Endothelial cell of umbilical vein (primary cell): ENCODE measurements at regions of chr17 and their contacts with region 1.

Region 1: GRCh38 chr17:2929881-2930533 is 133.4 kb downstream of the OR1D5 start:
- DNase-seq: peak; percentile 17
- H3K4me3 ChIP-seq: no peak overlapping the region
- H3K27ac ChIP-seq: no peak overlapping the region
- H3K4me1 ChIP-seq: no peaks in the 10 kb centered on the region
- H3K27me3 ChIP-seq: peaks cover 0 to 4% of the 10 kb centered on the region in 2 experiments
- CTCF ChIP-seq: peak; percentile 53 to 79
- POLR2A ChIP-seq: no peak

Region 2: GRCh38 chr17:2786176-2786881 is 143.7 kb before region 1 on chr17:
- CTCF ChIA-PET with region 1: interaction called, 11 read pairs
- POLR2A ChIA-PET with region 1: no interaction called
- dilution Hi-C with region 1: no loop called
- intact Hi-C with region 1: loop called (anchors 1 kb)
- DNase-seq: peak; percentile 78
- H3K4me3 ChIP-seq: no peak overlapping the region
- H3K27ac ChIP-seq: no peak overlapping the region
- H3K4me1 ChIP-seq: no peaks in the 10 kb centered on the region
- H3K27me3 ChIP-seq: no peaks in the 10 kb centered on the region
- CTCF ChIP-seq: peak; percentile 87 to 91
- POLR2A ChIP-seq: no peak

Region 3: GRCh38 chr17:2828397-2829038 is 101.5 kb before region 1 on chr17:
- CTCF ChIA-PET with region 1: interaction called, 13 read pairs
- POLR2A ChIA-PET with region 1: no interaction called
- dilution Hi-C with region 1: no loop called
- intact Hi-C with region 1: loop called (anchors 1 kb)
- DNase-seq: peak; percentile 44
- H3K4me3 ChIP-seq: no peak overlapping the region
- H3K27ac ChIP-seq: no peak overlapping the region
- H3K4me1 ChIP-seq: no peaks in the 10 kb centered on the region
- H3K27me3 ChIP-seq: no peaks in the 10 kb centered on the region
- CTCF ChIP-seq: peak; percentile 73 to 93
- POLR2A ChIP-seq: no peak

Region 4: DNA sequence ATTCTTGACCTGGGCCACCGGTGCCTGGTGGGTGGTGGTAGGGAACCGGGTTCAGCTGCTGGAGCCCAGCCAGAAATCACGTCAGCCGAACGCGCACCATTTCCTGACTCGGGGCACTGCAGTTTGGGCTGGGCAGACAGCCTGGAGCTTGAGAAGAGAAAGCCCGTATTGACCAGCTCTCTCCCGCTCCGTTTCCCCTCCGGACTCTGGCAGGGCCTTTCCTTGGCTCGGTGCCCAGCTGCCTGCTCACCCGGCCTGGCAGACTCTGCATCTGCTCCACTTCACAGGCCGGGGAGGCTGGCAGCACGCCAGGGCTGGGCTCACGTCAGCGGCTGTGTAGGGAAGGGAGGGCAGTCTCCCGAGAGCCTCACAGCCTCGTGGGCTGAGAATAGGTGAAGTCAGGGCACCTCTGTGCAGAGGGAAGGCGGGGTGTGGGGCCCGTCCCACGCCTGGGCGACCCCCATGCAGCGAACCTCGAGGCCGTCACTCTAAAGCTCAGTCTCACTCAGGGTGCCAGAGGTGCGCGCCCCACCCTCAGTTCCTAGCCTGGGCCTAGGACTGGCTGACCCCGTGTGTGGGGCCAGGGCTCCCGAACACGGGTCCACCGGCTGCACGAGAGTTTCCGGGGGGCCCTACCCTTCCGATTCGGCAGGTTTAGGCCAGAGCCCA is 74.3 kb after region 1 on chr17:
- CTCF ChIA-PET with region 1: interaction called, 14 read pairs
- POLR2A ChIA-PET with region 1: no interaction called
- dilution Hi-C with region 1: no loop called
- intact Hi-C with region 1: no loop called
- DNase-seq: peak; percentile 99
- H3K4me3 ChIP-seq: no peak overlapping the region
- H3K27ac ChIP-seq: peak overlapping the region; percentile 85
- H3K4me1 ChIP-seq: peaks cover 17% of the 10 kb centered on the region
- H3K27me3 ChIP-seq: no peaks in the 10 kb centered on the region
- CTCF ChIP-seq: no peak
- POLR2A ChIP-seq: peak; percentile 20